ENCODE measurements at regions of chr19 and their contacts with region 1.

Region 1: DNA sequence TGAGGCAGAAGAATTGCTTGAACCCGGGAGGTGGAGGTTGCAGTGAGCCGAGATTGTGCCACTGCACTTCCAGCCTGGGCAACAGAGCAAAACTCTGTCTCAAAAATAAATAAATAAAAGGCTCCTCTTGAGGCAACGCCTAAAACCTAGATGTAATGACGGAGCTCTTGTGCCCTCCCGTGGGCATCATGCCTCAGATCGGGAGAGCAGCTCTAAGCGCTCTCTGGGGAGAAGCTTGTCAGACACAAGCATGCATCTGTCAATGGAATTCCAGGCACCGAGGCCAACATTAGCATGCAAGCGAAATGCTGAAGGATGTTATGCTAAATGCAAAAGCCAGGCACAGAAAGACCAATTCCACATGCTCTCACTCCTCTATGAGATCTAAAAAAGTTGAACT is 45.6 kb upstream of the MRI1 start:
- DNase-seq: peak in 1 of 2 donors; percentile 56
- ATAC-seq: no peak
- H3K4me3 ChIP-seq: no peak overlapping the region
- H3K27ac ChIP-seq: no peak overlapping the region
- H3K4me1 ChIP-seq: no peaks in the 10 kb centered on the region
- H3K27me3 ChIP-seq: no peaks in the 10 kb centered on the region

Region 2: GRCh38 chr19:13277104-13277809 is 441.5 kb before region 1 on chr19:
- intact Hi-C with region 1: loop called in 1 of 2 experiments (anchors 5 kb)
- DNase-seq: peak; percentile 64 to 71
- ATAC-seq: peak; percentile 88
- H3K4me3 ChIP-seq: no peak overlapping the region
- H3K27ac ChIP-seq: no peak overlapping the region
- H3K4me1 ChIP-seq: no peaks in the 10 kb centered on the region
- H3K27me3 ChIP-seq: no peaks in the 10 kb centered on the region

Region 3: GRCh38 chr19:13597640-13598039 is 121.1 kb before region 1 on chr19:
- intact Hi-C with region 1: loop called (anchors 2 to 5 kb)
- DNase-seq: peak; percentile 61 to 67
- ATAC-seq: peak; percentile 69
- H3K4me3 ChIP-seq: no peak overlapping the region
- H3K27ac ChIP-seq: no peak overlapping the region
- H3K4me1 ChIP-seq: no peaks in the 10 kb centered on the region
- H3K27me3 ChIP-seq: no peaks in the 10 kb centered on the region

Region 4: DNA sequence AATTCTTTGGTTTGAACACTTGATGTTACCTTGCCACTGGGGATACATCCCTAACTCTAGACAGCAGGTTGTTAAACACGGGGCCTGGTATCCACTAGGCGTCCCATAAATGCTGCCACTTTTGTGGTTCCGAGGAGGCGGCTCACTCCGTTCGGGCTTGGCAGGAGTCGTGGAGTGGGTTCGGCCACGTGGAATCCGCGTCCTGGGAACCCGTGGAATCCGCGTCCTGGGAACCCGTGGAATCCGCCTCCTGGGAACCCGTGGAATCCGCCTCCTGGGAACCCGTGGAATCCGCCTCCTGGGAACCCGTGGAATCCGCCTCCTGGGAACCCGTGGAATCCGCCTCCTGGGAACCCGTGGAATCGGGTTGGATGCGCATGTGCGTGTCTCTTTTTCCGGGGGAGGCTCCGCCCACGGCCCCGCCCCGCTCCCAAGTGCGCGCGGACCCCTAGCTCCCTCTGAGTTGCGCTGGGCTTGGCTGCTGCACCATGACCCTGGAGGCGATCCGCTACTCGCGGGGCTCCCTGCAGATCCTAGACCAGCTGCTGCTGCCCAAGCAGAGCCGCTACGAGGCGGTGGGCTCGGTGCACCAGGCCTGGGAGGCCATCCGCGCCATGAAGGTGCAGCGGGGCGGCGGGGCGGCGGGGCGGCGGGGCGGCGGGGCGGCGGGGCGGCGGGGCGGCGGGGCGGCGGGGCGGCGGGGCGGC is 45.5 kb after region 1 on chr19 and contains the start of gene MRI1:
- intact Hi-C with region 1: no loop called
- DNase-seq: peak; percentile 84 to 94
- ATAC-seq: peak; percentile 91
- H3K4me3 ChIP-seq: peak within 1 kb of the TSS; percentile 66 to 78
- H3K27ac ChIP-seq: peak within 1 kb of the TSS in 1 of 2 donors; percentile 19
- H3K4me1 ChIP-seq: no peaks in the 10 kb centered on the region
- H3K27me3 ChIP-seq: no peaks in the 10 kb centered on the region
- total RNA-seq, gene MRI1: 25.5 to 44.6 TPM

Measured in aorta (tissue), 5 donors.